PC-9 (cell line): ENCODE measurements at regions of chr6 and their contacts with region 1.

Region 1: GRCh38 chr6:42796171-42796570 is 14.3 kb downstream of the BICRAL start:
- DNase-seq: no peak
- H3K4me3 ChIP-seq: no peak overlapping the region
- H3K27ac ChIP-seq: no peak overlapping the region
- H3K4me1 ChIP-seq: no peaks in the 10 kb centered on the region
- H3K27me3 ChIP-seq: no peaks in the 10 kb centered on the region
- CTCF ChIP-seq: no peak

Region 2: DNA sequence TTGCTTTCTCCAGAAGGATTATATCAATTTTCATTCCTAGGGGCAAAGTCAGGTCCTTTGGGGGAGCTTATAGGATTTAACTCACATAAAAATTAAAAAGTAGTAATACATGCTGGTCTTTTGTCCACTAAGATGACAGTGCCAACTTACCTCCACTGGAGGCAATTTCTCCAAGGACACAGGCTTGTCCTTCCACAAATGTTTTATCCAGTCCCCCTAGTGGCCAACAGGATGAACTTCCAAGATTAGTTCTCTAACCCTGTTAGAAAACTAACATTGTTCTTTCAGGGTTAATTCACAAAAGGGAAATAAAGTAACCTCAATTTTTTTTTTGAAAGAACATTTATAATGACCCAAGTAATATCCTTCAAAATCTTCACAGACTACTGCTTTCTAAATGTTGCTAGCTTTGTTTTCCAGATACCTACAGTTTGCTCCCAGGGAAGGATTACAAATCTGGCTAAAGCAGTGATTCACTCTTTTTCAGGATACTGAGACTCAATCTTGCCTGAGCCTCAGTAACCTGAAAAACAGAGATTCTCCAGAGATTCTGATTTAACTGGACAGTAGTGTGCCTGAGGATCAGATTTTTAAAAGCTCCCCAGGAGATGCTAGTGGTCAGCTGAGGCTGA is 264.0 kb before region 1 on chr6:
- CTCF ChIA-PET with region 1: no interaction called
- POLR2A ChIA-PET with region 1: no interaction called
- intact Hi-C with region 1: no loop called
- DNase-seq: peak; percentile 12 to 49
- H3K4me3 ChIP-seq: no peak overlapping the region
- H3K27ac ChIP-seq: no peak overlapping the region
- H3K4me1 ChIP-seq: peaks cover 14% of the 10 kb centered on the region
- H3K27me3 ChIP-seq: no peaks in the 10 kb centered on the region
- CTCF ChIP-seq: peak; percentile 94

Region 3: DNA sequence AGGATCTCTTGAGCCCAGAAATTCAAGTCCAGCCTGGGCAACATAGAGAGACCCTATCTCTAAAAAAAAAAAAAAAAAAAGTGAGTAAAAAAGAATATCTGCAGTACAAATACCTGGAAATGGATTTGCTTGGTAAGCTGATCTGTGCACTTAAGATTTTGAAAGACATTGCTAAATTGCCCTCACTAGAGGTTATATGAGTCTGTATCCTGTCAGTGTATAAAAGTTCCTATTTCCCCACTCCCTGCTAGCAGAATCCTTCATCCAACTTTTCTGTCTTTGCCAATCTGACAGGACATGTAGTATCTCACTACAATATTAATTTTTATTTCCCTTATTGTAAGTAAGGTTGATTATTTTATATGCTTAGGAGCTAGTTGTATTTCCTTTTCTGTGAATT is 21.7 kb after region 1 on chr6:
- CTCF ChIA-PET with region 1: no interaction called
- POLR2A ChIA-PET with region 1: interaction called, 10 read pairs
- intact Hi-C with region 1: no loop called
- DNase-seq: no peak
- H3K4me3 ChIP-seq: no peak overlapping the region
- H3K27ac ChIP-seq: no peak overlapping the region
- H3K4me1 ChIP-seq: no peaks in the 10 kb centered on the region
- H3K27me3 ChIP-seq: no peaks in the 10 kb centered on the region
- CTCF ChIP-seq: no peak

Region 4: GRCh38 chr6:42901536-42901957 is 105.4 kb after region 1 on chr6:
- CTCF ChIA-PET with region 1: no interaction called
- POLR2A ChIA-PET with region 1: no interaction called
- intact Hi-C with region 1: no loop called
- DNase-seq: peak; percentile 68 to 77
- H3K4me3 ChIP-seq: no peak overlapping the region
- H3K27ac ChIP-seq: no peak overlapping the region
- H3K4me1 ChIP-seq: no peaks in the 10 kb centered on the region
- H3K27me3 ChIP-seq: peaks cover 4% of the 10 kb centered on the region; the same call in 1 of the 2 replicates
- CTCF ChIP-seq: peak; percentile 95

Region 5: DNA sequence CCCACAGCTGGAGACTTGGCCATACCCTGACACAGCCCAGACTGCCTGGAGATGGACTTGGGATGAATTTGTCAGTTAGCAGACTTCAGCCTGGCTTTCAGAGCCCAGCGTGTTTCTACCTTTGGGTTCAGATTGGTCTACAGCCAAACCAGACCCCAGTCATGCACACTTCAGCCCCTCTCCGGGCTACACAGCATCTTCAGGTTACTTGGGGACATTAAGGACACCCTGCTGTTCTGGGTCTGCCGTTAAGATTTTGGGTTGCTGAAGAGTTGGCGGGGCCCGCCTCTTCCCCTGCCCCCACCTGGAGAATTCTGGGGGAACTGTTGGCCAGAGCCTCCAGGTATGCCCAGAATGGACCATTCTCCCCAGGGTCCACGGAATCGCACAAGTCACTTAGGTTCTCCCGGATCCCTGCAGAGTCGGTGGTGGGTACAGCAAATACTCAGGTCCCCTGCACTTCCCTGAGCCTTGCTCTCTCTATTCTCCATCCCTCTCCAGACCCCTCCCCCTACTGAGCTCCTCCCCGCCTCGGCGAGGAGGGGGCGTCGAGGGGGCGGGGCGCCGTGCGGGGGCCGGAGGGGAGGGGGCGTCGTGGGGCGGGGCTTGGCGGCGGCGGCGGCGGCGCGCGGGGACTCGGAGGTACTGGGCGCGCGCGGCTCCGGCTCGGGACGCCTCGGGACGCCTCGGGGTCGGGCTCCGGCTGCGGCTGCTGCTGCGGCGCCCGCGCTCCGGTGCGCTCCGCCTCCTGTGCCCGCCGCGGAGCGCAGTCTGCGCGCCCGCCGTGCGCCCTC is 279.7 kb after region 1 on chr6 and contains the start of gene PTK7:
- CTCF ChIA-PET with region 1: no interaction called
- POLR2A ChIA-PET with region 1: no interaction called
- intact Hi-C with region 1: no loop called
- DNase-seq: peak in 1 of 2 experiments; percentile 73
- H3K4me3 ChIP-seq: peak within 1 kb of the TSS; percentile 100
- H3K27ac ChIP-seq: 0 out of 2 replicates have a peak within 1 kb of the TSS, but pooled peaks have one; percentile 32
- H3K4me1 ChIP-seq: peaks cover 13% of the 10 kb centered on the region
- H3K27me3 ChIP-seq: no peaks in the 10 kb centered on the region
- CTCF ChIP-seq: no peak
- total RNA-seq, gene PTK7: 106 and 110 TPM in 2 replicates

Region 6: DNA sequence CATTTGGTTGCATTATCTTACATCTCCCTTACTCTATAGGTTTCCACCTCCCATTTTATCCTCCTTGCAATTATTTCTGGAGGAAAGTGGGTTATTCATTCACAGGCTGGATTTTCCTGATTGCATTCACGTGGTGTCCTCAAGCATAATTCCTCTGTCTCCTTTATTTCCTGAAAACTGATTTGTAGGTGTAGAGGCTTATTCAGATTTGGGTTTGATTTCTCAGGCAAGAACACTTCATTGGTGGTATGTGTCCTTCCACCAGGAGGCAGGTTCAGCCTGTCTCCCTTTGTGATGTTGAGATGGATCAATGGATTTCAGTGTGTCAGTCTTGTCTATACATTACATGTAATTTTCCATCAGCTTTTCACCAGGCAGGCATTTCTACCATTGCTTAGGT is 415.8 kb after region 1 on chr6:
- CTCF ChIA-PET with region 1: no interaction called
- POLR2A ChIA-PET with region 1: no interaction called
- intact Hi-C with region 1: no loop called
- DNase-seq: no peak
- H3K4me3 ChIP-seq: no peak overlapping the region
- H3K27ac ChIP-seq: no peak overlapping the region
- H3K4me1 ChIP-seq: no peaks in the 10 kb centered on the region; the same call in 1 of the 2 replicates
- H3K27me3 ChIP-seq: no peaks in the 10 kb centered on the region
- CTCF ChIP-seq: no peak